ENCODE measurements at regions of chr2 and their contacts with region 1.

Region 1: GRCh38 chr2:237154082-237154638 is 68.5 kb downstream of the COPS8 start:
- DNase-seq: peak; percentile 53
- H3K4me3 ChIP-seq: no peak overlapping the region
- H3K27ac ChIP-seq: no peak overlapping the region
- H3K4me1 ChIP-seq: peaks cover 12% of the 10 kb centered on the region
- H3K27me3 ChIP-seq: no peaks in the 10 kb centered on the region
- CTCF ChIP-seq: peak in 2 of 3 experiments; percentile 49 to 60
- POLR2A ChIP-seq: no peak

Region 2: DNA sequence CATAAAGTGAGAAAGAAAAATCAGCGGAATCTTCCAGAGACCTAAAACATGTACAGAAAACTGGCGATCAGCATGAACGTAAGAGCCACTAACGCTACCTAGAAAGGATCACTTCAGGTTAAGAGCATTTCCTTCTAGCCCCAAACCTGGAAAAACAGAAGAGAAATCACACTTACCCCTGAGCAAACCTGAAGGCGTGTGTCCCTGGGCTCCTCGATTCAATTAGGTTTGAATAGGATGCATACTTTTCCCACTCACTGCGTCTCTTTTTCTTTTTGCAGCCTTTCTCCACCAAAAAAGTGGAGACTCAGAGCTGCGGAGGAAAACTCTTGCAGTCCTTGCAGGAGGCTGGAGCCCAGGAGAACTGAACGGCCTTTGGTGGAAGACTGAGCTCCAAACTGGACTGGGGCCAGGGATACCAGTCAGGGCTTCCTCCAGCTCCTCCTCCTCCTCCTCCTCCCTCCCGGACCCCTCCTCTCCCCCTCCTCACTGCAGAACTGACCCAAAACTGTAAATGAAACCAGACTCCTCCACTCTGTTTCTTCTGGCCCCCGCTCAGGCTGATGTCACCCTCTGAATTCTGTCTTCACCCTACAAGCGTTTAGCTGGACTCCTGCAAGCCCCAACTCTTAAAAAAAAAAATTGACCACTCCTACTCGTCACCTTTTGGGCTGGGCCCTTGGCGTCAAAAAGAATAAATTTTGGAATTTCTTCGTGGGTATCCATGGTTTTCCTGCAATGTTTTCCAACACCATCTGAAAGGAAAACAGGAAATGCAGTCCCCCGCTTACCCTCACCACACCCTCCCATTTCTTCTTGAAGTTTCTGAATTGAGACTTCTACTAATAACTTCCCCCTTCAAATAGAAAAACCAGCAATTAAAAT is 259.9 kb after region 1 on chr2 and contains the start of gene COL6A3:
- intact Hi-C with region 1: loop called (anchors 10 kb)
- DNase-seq: peak; percentile 78
- H3K4me3 ChIP-seq: peak within 1 kb of the TSS; percentile 52 to 54
- H3K27ac ChIP-seq: peak within 1 kb of the TSS; percentile 90 to 93
- H3K4me1 ChIP-seq: no peaks in the 10 kb centered on the region
- H3K27me3 ChIP-seq: no peaks in the 10 kb centered on the region
- CTCF ChIP-seq: no peak
- POLR2A ChIP-seq: no peak
- total RNA-seq, gene COL6A3: 35.1 to 74.1 TPM

Region 3: GRCh38 chr2:237483040-237483721 is 329.0 kb after region 1 on chr2:
- intact Hi-C with region 1: loop called (anchors 5 kb)
- DNase-seq: no peak
- H3K4me3 ChIP-seq: no peak overlapping the region
- H3K27ac ChIP-seq: peak overlapping the region; percentile 8 to 59
- H3K4me1 ChIP-seq: peaks cover 22% of the 10 kb centered on the region
- H3K27me3 ChIP-seq: no peaks in the 10 kb centered on the region
- CTCF ChIP-seq: no peak
- POLR2A ChIP-seq: no peak

Measured in testis (tissue), 5 donors.